Heart right ventricle (tissue), 16 donors: ENCODE measurements at regions of chr14 and their contacts with region 1.

Region 1: GRCh38 chr14:103207029-103207387 is 83.7 kb downstream of the TNFAIP2 start:
- DNase-seq: peak; percentile 76 to 83
- ATAC-seq: peak; percentile 86 to 93 (median 89)
- H3K4me3 ChIP-seq: peak overlapping the region; percentile 31 to 58 (median 52)
- H3K27ac ChIP-seq: peak overlapping the region; percentile 22 to 75 (median 70)
- H3K4me1 ChIP-seq: peaks cover 0 to 27% (median 7%) of the 10 kb centered on the region in 9 donors
- H3K27me3 ChIP-seq: peaks cover 0 to 48% (median 16%) of the 10 kb centered on the region in 7 donors
- CTCF ChIP-seq: no peak

Region 2: DNA sequence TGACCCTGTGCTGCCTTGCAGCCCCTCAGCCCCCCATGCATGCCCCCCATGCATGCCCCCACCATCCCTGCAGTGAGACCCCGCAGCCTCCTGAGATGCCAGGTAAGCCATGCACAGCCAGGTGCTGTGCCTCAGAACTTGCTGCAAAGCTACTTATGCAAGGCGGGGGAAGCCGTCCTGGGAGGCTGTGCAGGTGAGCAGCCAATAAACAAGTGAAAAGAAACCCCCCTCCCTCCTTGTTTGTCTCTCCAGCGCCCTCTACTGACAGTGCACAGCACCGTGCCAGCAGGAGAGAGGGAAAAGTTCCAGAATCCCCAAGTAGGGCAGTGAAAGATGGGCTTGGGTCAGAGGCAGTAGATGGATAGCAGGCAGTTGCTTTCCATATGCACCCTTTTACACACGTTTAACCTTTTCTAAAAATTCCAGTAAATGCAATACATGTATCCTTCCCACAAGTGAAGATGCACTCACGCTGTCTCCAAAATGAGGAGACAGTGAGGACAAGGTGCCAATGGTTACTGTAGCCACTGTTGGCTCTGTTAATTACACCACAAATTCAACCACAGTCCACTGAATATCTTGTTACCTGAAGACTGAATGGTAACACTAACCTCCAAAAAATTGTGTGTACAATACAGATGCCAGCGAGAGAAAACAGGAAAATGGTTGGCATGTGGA is 65.8 kb before region 1 on chr14:
- intact Hi-C with region 1: no loop called
- DNase-seq: peak in 1 of 2 donors; percentile 32
- ATAC-seq: no peak
- H3K4me3 ChIP-seq: no peak overlapping the region
- H3K27ac ChIP-seq: no peak overlapping the region
- H3K4me1 ChIP-seq: peaks cover 0 to 29% (median 19%) of the 10 kb centered on the region in 9 donors
- H3K27me3 ChIP-seq: peaks cover 0 to 36% (median 20%) of the 10 kb centered on the region in 7 donors
- CTCF ChIP-seq: peak; percentile 12 to 71 (median 64)

Region 3: GRCh38 chr14:103260620-103261124 is 53.7 kb after region 1 on chr14:
- intact Hi-C with region 1: loop called in 1 of 10 experiments (anchors 5 kb)
- DNase-seq: peak; percentile 36 to 70
- ATAC-seq: peak in 7 of 8 donors; percentile 80 to 97 (median 92)
- H3K4me3 ChIP-seq: peak overlapping the region in 9 of 10 donors; percentile 26 to 60 (median 49)
- H3K27ac ChIP-seq: peak overlapping the region; percentile 36 to 92 (median 75)
- H3K4me1 ChIP-seq: peaks cover 0 to 16% (median 6%) of the 10 kb centered on the region in 9 donors
- H3K27me3 ChIP-seq: peaks cover 0 to 30% (median 0%) of the 10 kb centered on the region in 7 donors
- CTCF ChIP-seq: no peak

Region 4: GRCh38 chr14:103315351-103315911 is 108.4 kb after region 1 on chr14:
- intact Hi-C with region 1: no loop called
- DNase-seq: peak in 1 of 2 donors; percentile 23
- ATAC-seq: peak; percentile 28 to 93 (median 60)
- H3K4me3 ChIP-seq: no peak overlapping the region
- H3K27ac ChIP-seq: peak overlapping the region in 3 of 10 donors; percentile 36 to 70 (median 52)
- H3K4me1 ChIP-seq: peaks cover 0 to 18% (median 4%) of the 10 kb centered on the region in 9 donors
- H3K27me3 ChIP-seq: peaks cover 0 to 6% (median 0%) of the 10 kb centered on the region in 7 donors
- CTCF ChIP-seq: no peak